GM10248 (cell line): ENCODE measurements at regions of chr16 and their contacts with region 1.

Region 1: DNA sequence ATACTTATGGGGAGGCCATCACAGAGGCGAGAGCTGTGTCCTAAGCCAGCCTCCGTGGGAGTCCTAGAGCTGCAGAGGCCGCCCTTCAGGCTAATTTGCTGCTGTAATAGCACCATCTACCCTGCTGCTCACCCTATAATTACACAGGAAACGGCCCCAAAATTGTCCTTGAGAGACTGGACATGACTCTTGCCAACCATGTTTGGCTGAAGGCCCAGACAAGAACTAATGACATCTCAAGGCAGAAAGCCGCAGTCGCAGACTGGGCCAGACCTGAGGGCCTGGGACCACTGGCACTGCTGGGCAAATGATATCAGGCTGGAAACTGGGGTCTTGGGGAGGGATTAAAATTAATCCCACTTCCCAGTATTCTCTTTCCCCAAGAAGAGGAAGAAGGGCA is 24.1 kb downstream of the PSMD7 start:
- DNase-seq: no peak
- CTCF ChIP-seq: no peak

Region 2: DNA sequence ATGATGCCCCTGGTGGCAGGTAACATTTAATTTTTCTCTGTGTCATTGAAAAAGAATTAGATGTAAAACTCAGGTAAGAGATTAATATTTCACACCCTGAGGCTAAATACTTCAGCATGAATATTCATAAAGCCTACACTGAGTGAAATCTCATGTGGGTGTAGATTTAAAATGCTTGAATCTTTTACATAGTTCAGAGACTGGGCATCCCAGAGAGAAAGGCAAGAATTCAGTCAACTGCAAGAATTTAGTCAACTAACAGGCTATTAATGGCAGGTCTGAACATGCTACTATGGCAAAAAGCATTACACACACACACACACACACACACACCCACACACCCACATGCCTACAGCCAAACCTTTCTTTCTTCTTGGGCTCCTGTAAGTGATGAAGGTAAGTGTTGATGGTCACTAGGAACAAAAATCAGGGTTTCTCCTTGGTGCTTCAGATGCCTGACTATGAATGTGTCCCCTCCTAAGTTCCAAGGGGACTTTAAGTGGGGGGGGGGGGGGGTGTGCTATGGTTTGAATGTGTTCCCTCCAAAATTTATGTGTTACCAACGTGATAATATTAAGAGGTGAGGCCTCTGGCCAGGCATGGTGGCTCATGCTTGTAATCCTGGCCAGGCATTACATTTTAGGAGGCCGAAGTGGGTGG is 87.8 kb before region 1 on chr16:
- CTCF ChIA-PET with region 1: no interaction called
- POLR2A ChIA-PET with region 1: no interaction called
- DNase-seq: no peak
- CTCF ChIP-seq: no peak

Region 3: GRCh38 chr16:74309789-74310781 is 10.6 kb before region 1 on chr16:
- CTCF ChIA-PET with region 1: interaction called, 17 read pairs
- POLR2A ChIA-PET with region 1: no interaction called
- DNase-seq: peak; percentile 57
- CTCF ChIP-seq: peak; percentile 69